Activated CD4-positive, alpha-beta memory T cell treated with anti-CD3 and anti-CD28 coated beads for 36 hours (primary cell): ENCODE measurements at regions of chr18 and their contacts with region 1.

Region 1: DNA sequence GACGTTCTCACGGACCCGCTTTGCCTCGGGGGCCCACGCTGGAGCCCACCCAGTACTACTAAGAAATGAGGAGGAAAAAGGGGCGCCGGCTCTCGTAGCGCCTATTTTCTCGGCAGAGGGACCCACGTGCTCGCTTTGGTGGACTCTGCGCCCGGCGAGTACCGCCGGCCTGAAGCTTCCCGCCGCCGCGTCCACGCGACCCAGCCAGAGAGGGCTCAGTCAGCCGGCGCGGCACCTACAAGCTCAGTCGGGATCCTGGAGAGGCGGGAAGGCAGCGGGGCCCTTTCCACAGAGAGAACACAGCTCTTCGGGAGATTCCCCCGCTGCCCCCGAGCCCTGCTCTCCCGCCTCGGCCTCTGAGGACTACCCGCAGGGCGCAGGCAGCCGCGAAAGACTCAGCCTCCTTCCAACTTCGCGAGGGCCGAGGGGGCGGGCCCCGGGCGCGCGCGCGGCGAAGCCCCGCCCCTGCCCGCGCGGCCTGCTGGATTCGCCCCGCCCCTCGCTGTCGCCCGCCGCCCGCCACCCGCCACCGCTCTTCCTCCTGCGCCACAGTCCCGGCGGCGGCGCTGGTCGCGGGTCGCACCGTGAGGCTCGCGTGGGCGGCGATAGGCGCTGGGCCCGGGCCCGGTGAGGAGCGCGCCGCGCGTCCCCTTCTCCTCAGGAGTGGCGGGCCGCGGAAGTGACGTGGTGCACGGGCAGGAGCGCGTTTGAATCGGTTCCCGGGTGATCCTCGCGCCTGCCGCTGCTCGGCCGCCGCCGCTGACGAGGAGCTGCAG is at the start of gene SMCHD1:
- DNase-seq: peak; percentile 94
- H3K4me3 Mint-ChIP-seq: peak within 1 kb of the TSS; percentile 91
- H3K27ac Mint-ChIP-seq: peak within 1 kb of the TSS; percentile 97
- H3K4me1 Mint-ChIP-seq: peaks cover 29% of the 10 kb centered on the region
- H3K27me3 Mint-ChIP-seq: no peaks in the 10 kb centered on the region
- total RNA-seq, gene SMCHD1: 86.0 to 94.5 TPM

Region 2: DNA sequence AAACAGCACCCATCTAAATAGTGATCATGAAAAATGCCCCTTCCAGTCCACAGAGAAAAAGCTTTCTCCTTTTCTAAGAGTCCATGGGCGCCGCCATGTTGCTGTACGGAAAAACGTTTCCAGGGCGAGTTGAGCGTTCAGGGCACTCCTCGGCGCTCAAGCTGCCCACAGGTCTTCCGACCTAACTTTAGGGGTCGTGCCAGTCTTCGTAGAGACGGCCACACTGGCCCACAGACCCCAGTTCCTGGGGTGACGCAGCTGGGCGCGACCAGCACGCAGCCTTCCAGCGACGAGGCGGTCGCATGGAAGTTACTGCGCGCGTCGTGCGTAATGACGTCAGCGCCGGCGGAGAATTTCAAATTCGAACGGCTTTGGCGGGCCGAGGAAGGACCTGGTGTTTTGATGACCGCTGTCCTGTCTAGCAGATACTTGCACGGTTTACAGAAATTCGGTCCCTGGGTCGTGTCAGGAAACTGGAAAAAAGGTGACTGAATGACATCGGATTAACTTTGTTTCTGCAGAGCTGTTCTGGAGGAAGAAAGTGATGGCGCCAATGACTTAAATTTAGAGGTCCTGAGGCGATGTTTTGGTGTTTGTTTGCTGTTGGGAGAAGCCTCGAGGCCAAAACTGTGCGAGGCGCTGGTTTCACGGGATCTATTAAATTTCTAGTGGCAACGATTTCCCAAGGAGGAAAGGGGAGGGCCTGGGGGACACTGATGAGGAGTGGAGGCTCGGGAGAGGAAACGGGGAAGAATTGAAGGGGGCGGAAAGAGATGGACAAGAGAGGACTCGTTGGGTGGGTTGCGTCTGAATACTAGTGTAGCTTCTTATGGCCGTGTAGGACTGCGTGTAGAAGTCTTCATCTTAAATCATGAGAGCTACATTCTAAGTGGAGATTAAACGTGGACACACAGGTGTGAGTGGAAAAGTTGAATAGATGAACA is 83.9 kb before region 1 on chr18 and contains the starts of genes METTL4 and NDC80:
- CTCF ChIA-PET with region 1: interaction called, 3 read pairs
- POLR2A ChIA-PET with region 1: interaction called, 12 read pairs
- intact Hi-C with region 1: loop called (anchors 1 kb)
- DNase-seq: peak; percentile 90
- H3K4me3 Mint-ChIP-seq: peak within 1 kb of the TSS; percentile 96
- H3K27ac Mint-ChIP-seq: peak within 1 kb of the TSS; percentile 95
- H3K4me1 Mint-ChIP-seq: peaks cover 51% of the 10 kb centered on the region
- H3K27me3 Mint-ChIP-seq: no peaks in the 10 kb centered on the region
- total RNA-seq, gene METTL4: 19.6 to 23.0 TPM
- total RNA-seq, gene NDC80: 79.3 to 83.1 TPM

Region 3: GRCh38 chr18:2606335-2606734 is 49.0 kb before region 1 on chr18:
- CTCF ChIA-PET with region 1: interaction called, 5 read pairs
- POLR2A ChIA-PET with region 1: interaction called, 5 read pairs
- intact Hi-C with region 1: loop called (anchors 1 kb)
- DNase-seq: no peak
- H3K4me3 Mint-ChIP-seq: peak overlapping the region; percentile 33
- H3K27ac Mint-ChIP-seq: peak overlapping the region; percentile 82
- H3K4me1 Mint-ChIP-seq: peaks cover 40% of the 10 kb centered on the region
- H3K27me3 Mint-ChIP-seq: no peaks in the 10 kb centered on the region

Region 4: DNA sequence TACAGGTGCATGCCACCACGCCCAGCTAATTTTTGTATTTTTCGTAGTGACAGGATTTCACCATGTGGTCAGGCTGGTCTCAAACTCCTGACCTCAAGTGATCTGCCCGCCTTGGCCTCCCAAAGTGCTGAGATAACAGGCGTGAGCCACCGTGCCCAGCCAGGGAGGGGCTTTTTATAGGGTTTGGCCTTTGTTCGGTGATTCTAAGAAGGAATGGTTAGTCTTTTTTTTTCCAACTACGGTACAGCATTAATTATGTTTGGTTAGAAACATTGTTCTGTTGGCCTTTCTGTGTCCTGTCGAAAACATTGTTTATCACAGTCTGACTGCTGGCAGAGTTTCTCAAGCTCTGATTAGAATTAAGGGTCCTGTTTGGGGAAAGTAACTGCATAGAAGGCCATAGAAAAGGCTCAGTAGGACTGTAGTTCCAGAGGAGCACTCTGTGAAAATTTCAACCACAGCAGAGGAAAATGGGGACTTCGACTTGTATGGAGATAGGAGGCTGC is 19.2 kb before region 1 on chr18:
- CTCF ChIA-PET with region 1: interaction called, 5 read pairs
- POLR2A ChIA-PET with region 1: interaction called, 9 read pairs
- intact Hi-C with region 1: loop called (anchors 1 kb)
- DNase-seq: no peak
- H3K4me3 Mint-ChIP-seq: peak overlapping the region; percentile 59
- H3K27ac Mint-ChIP-seq: peak overlapping the region; percentile 92
- H3K4me1 Mint-ChIP-seq: peaks cover 84% of the 10 kb centered on the region
- H3K27me3 Mint-ChIP-seq: no peaks in the 10 kb centered on the region

Region 5: GRCh38 chr18:2681993-2682603 is 26.7 kb after region 1 on chr18:
- CTCF ChIA-PET with region 1: interaction called, 4 read pairs
- POLR2A ChIA-PET with region 1: interaction called, 12 read pairs
- intact Hi-C with region 1: loop called (anchors 1 kb)
- DNase-seq: no peak
- H3K4me3 Mint-ChIP-seq: peak overlapping the region; percentile 20
- H3K27ac Mint-ChIP-seq: peak overlapping the region; percentile 90
- H3K4me1 Mint-ChIP-seq: peaks cover 67% of the 10 kb centered on the region
- H3K27me3 Mint-ChIP-seq: no peaks in the 10 kb centered on the region

Region 6: GRCh38 chr18:2978646-2979045 is 323.3 kb after region 1 on chr18:
- CTCF ChIA-PET with region 1: no interaction called
- POLR2A ChIA-PET with region 1: interaction called, 4 read pairs
- intact Hi-C with region 1: loop called (anchors 5 kb)
- DNase-seq: peak; percentile 72
- H3K4me3 Mint-ChIP-seq: peak overlapping the region; percentile 73
- H3K27ac Mint-ChIP-seq: peak overlapping the region; percentile 93
- H3K4me1 Mint-ChIP-seq: peaks cover 85% of the 10 kb centered on the region
- H3K27me3 Mint-ChIP-seq: no peaks in the 10 kb centered on the region